Activated naive CD4-positive, alpha-beta T cell treated with anti-CD3 and anti-CD28 coated beads for 36 hours (primary cell): ENCODE measurements at regions of chr18 and their contacts with region 1.

Region 1: GRCh38 chr18:75226286-75226955 is 15.8 kb downstream of the TSHZ1 start:
- DNase-seq: peak; percentile 65
- H3K4me3 Mint-ChIP-seq: peak overlapping the region; percentile 64
- H3K27ac Mint-ChIP-seq: peak overlapping the region; percentile 68
- H3K4me1 Mint-ChIP-seq: peaks cover 75% of the 10 kb centered on the region
- H3K27me3 Mint-ChIP-seq: no peaks in the 10 kb centered on the region

Region 2: GRCh38 chr18:75214766-75215510 is 11.5 kb before region 1 on chr18:
- CTCF ChIA-PET with region 1: interaction called, 3 read pairs
- intact Hi-C with region 1: loop called (anchors 1 kb)
- DNase-seq: no peak
- H3K4me3 Mint-ChIP-seq: peak overlapping the region; percentile 19
- H3K27ac Mint-ChIP-seq: peak overlapping the region; percentile 77
- H3K4me1 Mint-ChIP-seq: peaks cover 67% of the 10 kb centered on the region
- H3K27me3 Mint-ChIP-seq: no peaks in the 10 kb centered on the region

Region 3: GRCh38 chr18:75247611-75248421 is 21.4 kb after region 1 on chr18:
- CTCF ChIA-PET with region 1: interaction called, 14 read pairs
- intact Hi-C with region 1: loop called (anchors 1 kb)
- DNase-seq: peak; percentile 36
- H3K4me3 Mint-ChIP-seq: peak overlapping the region; percentile 77
- H3K27ac Mint-ChIP-seq: peak overlapping the region; percentile 93
- H3K4me1 Mint-ChIP-seq: peaks cover 60% of the 10 kb centered on the region
- H3K27me3 Mint-ChIP-seq: no peaks in the 10 kb centered on the region